Caco-2 (cell line): ENCODE measurements at regions of chr11 and their contacts with region 1.

Region 1: DNA sequence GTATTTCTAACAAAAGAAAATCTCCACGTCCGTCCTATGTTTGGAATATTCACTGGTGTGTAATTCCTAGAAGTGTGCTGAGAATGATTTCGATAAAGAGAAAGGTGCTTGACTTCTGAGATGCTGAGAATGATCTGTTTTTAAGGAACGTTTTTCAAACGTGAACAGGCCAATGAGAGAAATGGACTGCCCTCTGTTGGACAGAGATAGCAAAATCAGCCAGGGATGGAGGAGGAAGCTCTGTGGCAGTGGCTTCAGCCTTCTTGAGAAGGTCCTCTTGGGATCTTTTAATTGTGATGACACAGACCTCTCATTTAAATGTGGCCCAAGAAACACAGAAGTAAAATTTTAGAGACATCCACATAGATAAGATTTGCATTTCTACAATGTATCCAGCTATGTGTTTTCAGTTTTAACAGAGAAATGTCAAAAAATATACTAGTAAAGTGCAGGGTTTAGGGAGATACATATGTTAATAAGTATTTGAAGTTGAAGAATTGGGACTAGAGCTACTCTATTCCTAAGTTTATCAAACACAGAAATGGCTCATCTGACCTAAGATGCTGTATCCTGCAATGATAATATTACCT is 84.0 kb upstream of the RCN1 start:
- DNase-seq: peak in 1 of 2 experiments; percentile 44
- H3K4me3 ChIP-seq: no peak overlapping the region
- H3K4me3 Mint-ChIP-seq: no peak overlapping the region
- H3K27ac Mint-ChIP-seq: no peak overlapping the region
- H3K4me1 ChIP-seq: no peaks in the 10 kb centered on the region
- H3K4me1 Mint-ChIP-seq: no peaks in the 10 kb centered on the region
- H3K27me3 ChIP-seq: peaks cover 2% of the 10 kb centered on the region
- H3K27me3 Mint-ChIP-seq: peaks cover 21% of the 10 kb centered on the region
- CTCF ChIP-seq: peak; percentile 34 to 71

Region 2: GRCh38 chr11:31397239-31397834 is 609.6 kb before region 1 on chr11:
- CTCF ChIA-PET with region 1: no interaction called
- POLR2A ChIA-PET with region 1: no interaction called
- intact Hi-C with region 1: loop called (anchors 1 kb)
- DNase-seq: peak in 1 of 2 experiments; percentile 17
- H3K4me3 ChIP-seq: no peak overlapping the region
- H3K4me3 Mint-ChIP-seq: no peak overlapping the region
- H3K27ac Mint-ChIP-seq: no peak overlapping the region
- H3K4me1 ChIP-seq: no peaks in the 10 kb centered on the region
- H3K4me1 Mint-ChIP-seq: no peaks in the 10 kb centered on the region
- H3K27me3 ChIP-seq: no peaks in the 10 kb centered on the region
- H3K27me3 Mint-ChIP-seq: no peaks in the 10 kb centered on the region
- CTCF ChIP-seq: peak; percentile 51

Region 3: DNA sequence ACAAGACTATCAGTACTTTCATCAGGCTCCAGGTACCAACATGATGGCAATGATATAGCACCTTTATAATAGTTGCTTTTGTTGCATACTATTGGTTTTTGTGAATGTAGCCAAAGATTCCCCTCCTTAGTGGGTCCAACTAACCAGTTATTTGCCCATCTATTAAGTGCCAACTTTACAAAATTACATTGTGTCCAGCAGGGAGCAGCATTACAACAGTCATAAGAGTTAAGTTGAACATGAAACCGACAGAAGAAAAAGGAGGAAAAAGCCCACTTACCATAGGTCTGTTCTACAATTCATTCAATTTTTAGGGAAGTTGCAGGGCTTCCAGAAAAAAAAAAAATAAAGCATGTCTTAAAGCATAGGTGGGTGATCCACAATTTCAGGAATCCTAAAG is 519.0 kb before region 1 on chr11:
- CTCF ChIA-PET with region 1: no interaction called
- POLR2A ChIA-PET with region 1: no interaction called
- intact Hi-C with region 1: loop called (anchors 5 kb)
- DNase-seq: peak in 1 of 2 experiments; percentile 32
- H3K4me3 ChIP-seq: no peak overlapping the region
- H3K4me3 Mint-ChIP-seq: no peak overlapping the region
- H3K27ac Mint-ChIP-seq: no peak overlapping the region
- H3K4me1 ChIP-seq: 0 out of 2 replicates have a peak, but pooled peaks cover 7% of the 10 kb centered on the region
- H3K4me1 Mint-ChIP-seq: no peaks in the 10 kb centered on the region
- H3K27me3 ChIP-seq: no peaks in the 10 kb centered on the region
- H3K27me3 Mint-ChIP-seq: no peaks in the 10 kb centered on the region
- CTCF ChIP-seq: peak; percentile 28 to 49

Region 4: DNA sequence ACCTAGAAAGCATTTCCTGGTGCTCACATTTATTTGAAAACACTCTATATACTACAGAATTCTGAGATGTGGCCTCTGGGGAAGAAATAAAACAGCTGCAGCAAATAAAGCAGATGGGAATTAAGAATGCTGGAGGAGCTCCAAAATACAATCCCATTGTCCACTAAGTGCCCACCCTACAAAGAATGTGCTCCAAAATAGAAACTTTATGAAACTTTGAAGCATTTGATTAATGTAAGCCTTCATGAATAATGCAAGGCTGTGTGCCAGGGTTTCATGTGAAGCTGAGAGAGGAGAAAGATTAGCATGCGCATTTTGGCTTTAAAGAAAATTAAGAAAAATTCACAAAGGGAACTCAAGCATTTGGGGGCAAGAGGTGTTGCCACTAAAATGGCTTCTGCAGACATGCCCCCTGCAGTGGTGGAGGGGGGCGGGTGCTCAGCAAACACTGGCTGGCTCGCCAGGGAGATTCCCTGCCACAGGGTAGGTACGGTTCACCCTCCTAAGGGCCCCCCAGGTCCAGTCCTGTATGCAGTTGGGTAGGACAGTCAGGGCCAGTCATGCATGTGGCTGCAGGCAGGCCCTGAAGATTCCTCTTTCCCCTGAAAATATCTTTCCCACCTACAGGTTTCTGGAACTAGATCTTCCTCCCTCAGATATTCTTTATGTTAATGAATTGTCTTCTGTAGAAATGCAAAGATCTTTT is 37.4 kb after region 1 on chr11:
- CTCF ChIA-PET with region 1: no interaction called
- POLR2A ChIA-PET with region 1: no interaction called
- intact Hi-C with region 1: no loop called
- DNase-seq: no peak
- H3K4me3 ChIP-seq: no peak overlapping the region
- H3K4me3 Mint-ChIP-seq: no peak overlapping the region
- H3K27ac Mint-ChIP-seq: no peak overlapping the region
- H3K4me1 ChIP-seq: no peaks in the 10 kb centered on the region
- H3K4me1 Mint-ChIP-seq: no peaks in the 10 kb centered on the region
- H3K27me3 ChIP-seq: no peaks in the 10 kb centered on the region
- H3K27me3 Mint-ChIP-seq: peaks cover 20% of the 10 kb centered on the region
- CTCF ChIP-seq: no peak